Endothelial cell of umbilical vein (primary cell): ENCODE measurements at regions of chr3 and their contacts with region 1.

Region 1: DNA sequence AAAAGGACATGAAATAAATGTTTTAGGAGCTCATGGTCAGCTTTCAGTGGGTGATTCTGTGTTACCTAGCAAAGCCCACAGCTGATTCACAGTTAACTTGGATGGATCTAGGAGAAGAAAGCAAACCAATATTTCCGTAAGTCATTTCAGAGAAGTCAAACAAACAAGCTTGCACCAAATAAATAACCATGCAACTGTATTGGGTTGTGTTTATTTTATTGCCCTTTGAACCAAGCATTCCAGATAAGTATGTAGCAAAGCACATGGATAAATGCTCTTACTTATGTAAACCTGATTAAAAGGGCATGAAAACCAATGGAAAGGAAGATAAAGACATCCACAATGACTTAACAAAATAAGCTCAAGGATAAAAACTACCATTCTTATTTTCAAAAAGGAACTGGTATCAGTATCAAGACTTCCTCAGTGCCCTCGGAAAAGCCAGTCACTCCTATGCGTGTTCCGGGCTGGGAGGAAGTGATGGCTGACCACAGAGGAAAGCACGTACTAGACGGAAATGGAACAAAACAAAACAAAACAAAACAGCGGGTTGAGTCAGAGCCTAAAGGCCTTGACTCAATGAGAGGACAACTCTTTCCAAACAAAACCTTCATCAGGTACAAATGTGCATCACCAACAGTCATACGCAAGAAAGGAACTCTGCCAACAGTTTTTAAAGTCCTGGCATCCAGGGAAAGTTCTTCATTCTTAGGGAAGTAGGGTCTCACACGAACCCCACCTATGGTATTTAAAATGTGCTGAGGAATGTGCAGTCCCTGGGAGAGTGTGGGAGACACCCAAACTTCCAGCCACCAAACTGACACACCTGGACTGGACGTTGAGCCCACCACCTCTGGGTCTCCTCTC is 103.3 kb downstream of the SNRK start:
- DNase-seq: peak; percentile 97
- H3K4me3 ChIP-seq: no peak overlapping the region
- H3K27ac ChIP-seq: peak overlapping the region; percentile 97
- H3K4me1 ChIP-seq: peaks cover 68% of the 10 kb centered on the region
- H3K27me3 ChIP-seq: no peaks in the 10 kb centered on the region
- CTCF ChIP-seq: no peak
- POLR2A ChIP-seq: peak; percentile 90

Region 2: DNA sequence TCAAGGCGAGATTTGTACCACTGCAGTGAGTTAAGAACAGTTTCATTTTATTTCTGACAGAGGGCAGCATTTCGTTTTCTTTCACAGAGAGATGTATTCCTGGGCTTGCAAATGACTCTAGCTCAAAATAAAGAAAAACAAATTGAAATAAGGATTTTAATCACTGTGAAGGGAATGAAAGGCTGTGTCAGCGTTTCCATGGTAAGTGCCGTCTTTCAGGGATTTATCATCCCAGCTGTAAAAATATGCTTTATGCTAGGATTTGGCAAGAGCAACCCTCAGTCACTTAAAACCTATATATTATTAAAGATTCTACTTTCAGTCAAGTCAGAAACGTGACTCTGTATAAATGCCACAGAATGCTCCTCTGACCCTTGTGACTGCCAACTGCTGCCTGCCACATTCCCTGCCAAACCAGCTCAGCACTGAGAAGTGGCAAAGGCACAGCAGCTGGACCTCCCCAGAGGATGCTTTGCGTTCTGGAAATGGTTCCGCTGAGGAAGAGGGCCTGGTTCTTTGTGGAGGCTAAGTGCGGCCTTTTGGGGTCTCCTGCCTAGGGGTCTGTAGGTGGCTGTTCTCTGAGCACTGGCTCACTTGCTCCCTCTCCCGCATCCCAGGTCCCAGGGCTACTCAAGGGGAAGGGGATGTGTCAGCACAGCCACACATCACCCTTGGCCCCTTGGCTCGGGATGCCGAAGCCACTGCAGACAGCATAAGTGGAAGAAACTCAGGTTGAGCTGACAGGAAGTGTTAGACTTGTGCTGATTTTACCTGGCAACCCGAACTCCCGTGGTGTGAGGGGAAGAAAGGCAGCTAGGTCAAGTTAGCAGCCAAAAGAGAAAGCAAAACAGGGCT is 227.2 kb before region 1 on chr3:
- CTCF ChIA-PET with region 1: interaction called, 15 read pairs
- POLR2A ChIA-PET with region 1: interaction called, 4 read pairs
- dilution Hi-C with region 1: no loop called
- intact Hi-C with region 1: loop called (anchors 1 kb)
- DNase-seq: peak; percentile 86
- H3K4me3 ChIP-seq: no peak overlapping the region
- H3K27ac ChIP-seq: peak overlapping the region; percentile 65
- H3K4me1 ChIP-seq: peaks cover 12% of the 10 kb centered on the region
- H3K27me3 ChIP-seq: no peaks in the 10 kb centered on the region
- CTCF ChIP-seq: peak; percentile 33 to 36
- POLR2A ChIP-seq: no peak

Region 3: GRCh38 chr3:43246976-43247375 is 142.6 kb before region 1 on chr3:
- CTCF ChIA-PET with region 1: no interaction called
- POLR2A ChIA-PET with region 1: no interaction called
- dilution Hi-C with region 1: no loop called
- intact Hi-C with region 1: loop called (anchors 1 kb)
- DNase-seq: peak; percentile 97
- H3K4me3 ChIP-seq: no peak overlapping the region
- H3K27ac ChIP-seq: peak overlapping the region; percentile 99
- H3K4me1 ChIP-seq: peaks cover 47% of the 10 kb centered on the region
- H3K27me3 ChIP-seq: no peaks in the 10 kb centered on the region
- CTCF ChIP-seq: no peak
- POLR2A ChIP-seq: peak; percentile 55

Region 4: GRCh38 chr3:43372809-43373559 is 16.6 kb before region 1 on chr3:
- CTCF ChIA-PET with region 1: interaction called, 11 read pairs
- POLR2A ChIA-PET with region 1: interaction called, 3 read pairs
- dilution Hi-C with region 1: no loop called
- intact Hi-C with region 1: loop called (anchors 1 kb)
- DNase-seq: no peak
- H3K4me3 ChIP-seq: no peak overlapping the region
- H3K27ac ChIP-seq: no peak overlapping the region
- H3K4me1 ChIP-seq: peaks cover 8% of the 10 kb centered on the region
- H3K27me3 ChIP-seq: no peaks in the 10 kb centered on the region
- CTCF ChIP-seq: no peak
- POLR2A ChIP-seq: no peak

Region 5: DNA sequence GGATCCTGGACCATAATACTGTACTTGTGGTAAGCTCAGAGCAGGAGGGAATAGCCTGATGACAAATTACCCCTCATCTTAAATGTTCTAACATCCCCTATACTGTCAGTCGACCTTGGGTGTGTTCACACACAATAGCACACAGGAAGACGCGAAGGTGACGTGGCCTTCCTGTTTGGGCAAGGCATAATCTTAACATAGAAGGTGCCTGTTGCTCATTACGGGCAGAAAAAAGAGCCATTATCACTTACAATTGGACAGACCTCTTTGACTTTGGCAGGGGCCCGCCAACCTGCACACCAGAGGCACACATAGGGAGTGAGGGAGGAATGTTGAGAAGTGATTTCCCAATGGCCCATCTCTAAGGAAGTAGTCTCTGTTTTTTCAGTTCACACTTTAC is 88.0 kb after region 1 on chr3:
- CTCF ChIA-PET with region 1: interaction called, 15 read pairs
- POLR2A ChIA-PET with region 1: interaction called, 8 read pairs
- dilution Hi-C with region 1: no loop called
- intact Hi-C with region 1: loop called (anchors 1 kb)
- DNase-seq: peak; percentile 59
- H3K4me3 ChIP-seq: no peak overlapping the region
- H3K27ac ChIP-seq: peak overlapping the region; percentile 79
- H3K4me1 ChIP-seq: peaks cover 25% of the 10 kb centered on the region
- H3K27me3 ChIP-seq: no peaks in the 10 kb centered on the region
- CTCF ChIP-seq: no peak
- POLR2A ChIP-seq: no peak

Region 6: GRCh38 chr3:43690400-43691119 is 300.9 kb after region 1 on chr3 and contains the start of gene ABHD5:
- CTCF ChIA-PET with region 1: no interaction called
- POLR2A ChIA-PET with region 1: no interaction called
- dilution Hi-C with region 1: no loop called
- intact Hi-C with region 1: loop called (anchors 5 kb)
- DNase-seq: peak; percentile 97
- H3K4me3 ChIP-seq: peak within 1 kb of the TSS; percentile 62 to 88 (median 87)
- H3K27ac ChIP-seq: peak within 1 kb of the TSS; percentile 76
- H3K4me1 ChIP-seq: peaks cover 12% of the 10 kb centered on the region
- H3K27me3 ChIP-seq: peaks cover 0 to 1% of the 10 kb centered on the region in 2 experiments
- CTCF ChIP-seq: peak; percentile 17 to 55
- POLR2A ChIP-seq: peak; percentile 100
- total RNA-seq, gene ABHD5: 17.1 and 21.2 TPM in 2 replicates